Activated CD4-positive, alpha-beta T cell treated with anti-CD3 and anti-CD28 coated beads, Interleukin-2, amount 10 ng/mL, durations not matched to agents 24 days and 14 days (primary cell): ENCODE measurements at regions of chr14 and their contacts with region 1.

Region 1: GRCh38 chr14:105045710-105046326 is 19.4 kb downstream of the GPR132 start:
- DNase-seq: peak; percentile 98
- H3K4me3 Mint-ChIP-seq: no peak overlapping the region
- H3K27ac Mint-ChIP-seq: peak overlapping the region; percentile 44
- H3K4me1 Mint-ChIP-seq: peaks cover 9% of the 10 kb centered on the region
- H3K27me3 Mint-ChIP-seq: peaks cover 3% of the 10 kb centered on the region

Region 2: DNA sequence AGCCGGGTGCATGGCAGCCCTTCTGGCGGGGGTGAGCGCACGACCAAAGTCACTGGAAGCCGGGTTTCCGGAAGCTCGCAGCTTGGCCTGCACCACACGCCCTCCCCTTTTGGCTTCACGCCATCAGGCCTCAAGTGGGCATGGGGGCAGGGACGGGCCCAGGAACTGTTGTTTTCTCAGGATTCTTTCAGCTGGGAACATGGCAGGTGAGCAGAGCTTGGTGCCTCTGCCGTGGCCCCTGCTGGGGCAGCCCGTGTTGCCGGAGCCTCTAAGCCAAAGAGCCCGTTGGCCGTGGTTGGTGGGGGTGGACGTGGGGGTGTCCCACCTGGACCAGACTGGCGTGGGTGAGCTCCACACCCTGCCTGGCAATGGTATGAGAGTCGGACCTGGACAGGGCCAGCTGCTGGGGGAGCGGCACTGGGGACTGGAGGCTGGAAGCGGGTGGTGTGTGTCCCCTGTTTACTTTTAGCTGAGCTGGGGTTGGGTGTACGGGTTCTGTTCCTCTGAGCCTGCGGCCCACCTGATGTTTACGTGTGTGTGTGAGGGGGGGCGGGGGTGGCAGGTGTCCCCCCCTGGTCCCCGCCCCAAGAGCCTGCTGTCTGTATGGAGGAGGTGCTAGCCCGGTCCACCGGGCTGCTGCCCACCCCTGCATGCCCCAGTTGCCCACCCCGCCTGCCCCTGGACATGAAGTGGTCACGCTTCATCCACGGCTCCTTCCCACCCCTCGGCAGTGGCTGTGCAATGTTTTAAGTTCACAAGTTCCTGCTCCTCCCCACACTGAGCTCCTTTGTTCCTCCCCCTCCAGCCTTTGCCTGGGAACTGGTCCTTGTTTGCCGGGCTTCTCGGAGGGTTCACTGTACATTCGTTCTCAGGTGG is 149.8 kb before region 1 on chr14:
- intact Hi-C with region 1: loop called (anchors 1 kb)
- DNase-seq: peak; percentile 53
- H3K4me3 Mint-ChIP-seq: no peak overlapping the region
- H3K27ac Mint-ChIP-seq: no peak overlapping the region
- H3K4me1 Mint-ChIP-seq: peaks cover 3% of the 10 kb centered on the region
- H3K27me3 Mint-ChIP-seq: peaks cover 1% of the 10 kb centered on the region

Region 3: GRCh38 chr14:104976198-104977007 is 69.4 kb before region 1 on chr14:
- intact Hi-C with region 1: loop called (anchors 1 kb)
- DNase-seq: peak; percentile 96
- H3K4me3 Mint-ChIP-seq: peak overlapping the region; percentile 31
- H3K27ac Mint-ChIP-seq: no peak overlapping the region
- H3K4me1 Mint-ChIP-seq: peaks cover 9% of the 10 kb centered on the region
- H3K27me3 Mint-ChIP-seq: peaks cover 24% of the 10 kb centered on the region